ENCODE measurements at regions of chr15 and their contacts with region 1.

Region 1: GRCh38 chr15:45378149-45378912 is at the start of gene GATM:
- DNase-seq: peak; percentile 78
- H3K4me3 Mint-ChIP-seq: peak within 1 kb of the TSS; percentile 84
- H3K27ac Mint-ChIP-seq: no peak within 1 kb of the TSS
- H3K4me1 Mint-ChIP-seq: peaks cover 9% of the 10 kb centered on the region
- H3K27me3 Mint-ChIP-seq: peaks cover 34% of the 10 kb centered on the region
- CTCF ChIP-seq: peak; percentile 39
- total RNA-seq, gene GATM: 0.54 and 1.6 TPM in 2 replicates

Region 2: DNA sequence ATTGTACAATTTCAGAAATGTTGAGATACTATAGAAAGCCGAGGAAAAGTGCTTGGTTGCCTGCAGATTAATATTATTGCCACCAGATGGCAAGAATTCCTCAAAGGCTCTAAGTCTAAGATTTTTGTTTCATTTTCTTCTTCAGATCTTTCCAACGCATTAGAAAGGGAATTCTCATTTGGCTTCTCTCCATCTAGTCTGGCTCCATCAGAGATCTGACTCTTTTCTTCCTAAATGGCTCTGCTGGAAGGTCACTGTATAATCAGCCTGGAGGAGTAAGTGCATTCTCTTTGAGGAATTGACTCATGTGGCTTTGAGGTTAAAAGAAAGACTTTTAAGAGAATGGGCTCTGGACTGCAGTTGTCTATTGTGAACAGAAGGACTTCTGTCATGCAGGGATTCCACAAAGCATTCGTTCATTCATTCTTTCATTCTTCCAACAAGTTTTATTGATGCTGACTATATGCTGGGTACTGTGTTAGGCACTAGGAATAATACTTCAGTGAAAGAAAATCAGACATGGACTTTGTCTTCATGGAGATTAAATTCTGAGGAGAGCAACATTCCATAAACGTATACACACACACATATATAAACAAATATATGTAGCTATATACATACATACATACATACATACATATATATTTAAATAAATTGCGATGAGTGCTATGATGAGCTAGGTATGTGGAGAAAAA is 71.0 kb before region 1 on chr15:
- CTCF ChIA-PET with region 1: interaction called, 3 read pairs
- POLR2A ChIA-PET with region 1: no interaction called
- intact Hi-C with region 1: loop called (anchors 5 kb)
- DNase-seq: peak; percentile 37
- H3K4me3 Mint-ChIP-seq: peak overlapping the region; percentile 35
- H3K27ac Mint-ChIP-seq: no peak overlapping the region
- H3K4me1 Mint-ChIP-seq: peaks cover 6% of the 10 kb centered on the region
- H3K27me3 Mint-ChIP-seq: peaks cover 21% of the 10 kb centered on the region
- CTCF ChIP-seq: peak; percentile 47

Region 3: DNA sequence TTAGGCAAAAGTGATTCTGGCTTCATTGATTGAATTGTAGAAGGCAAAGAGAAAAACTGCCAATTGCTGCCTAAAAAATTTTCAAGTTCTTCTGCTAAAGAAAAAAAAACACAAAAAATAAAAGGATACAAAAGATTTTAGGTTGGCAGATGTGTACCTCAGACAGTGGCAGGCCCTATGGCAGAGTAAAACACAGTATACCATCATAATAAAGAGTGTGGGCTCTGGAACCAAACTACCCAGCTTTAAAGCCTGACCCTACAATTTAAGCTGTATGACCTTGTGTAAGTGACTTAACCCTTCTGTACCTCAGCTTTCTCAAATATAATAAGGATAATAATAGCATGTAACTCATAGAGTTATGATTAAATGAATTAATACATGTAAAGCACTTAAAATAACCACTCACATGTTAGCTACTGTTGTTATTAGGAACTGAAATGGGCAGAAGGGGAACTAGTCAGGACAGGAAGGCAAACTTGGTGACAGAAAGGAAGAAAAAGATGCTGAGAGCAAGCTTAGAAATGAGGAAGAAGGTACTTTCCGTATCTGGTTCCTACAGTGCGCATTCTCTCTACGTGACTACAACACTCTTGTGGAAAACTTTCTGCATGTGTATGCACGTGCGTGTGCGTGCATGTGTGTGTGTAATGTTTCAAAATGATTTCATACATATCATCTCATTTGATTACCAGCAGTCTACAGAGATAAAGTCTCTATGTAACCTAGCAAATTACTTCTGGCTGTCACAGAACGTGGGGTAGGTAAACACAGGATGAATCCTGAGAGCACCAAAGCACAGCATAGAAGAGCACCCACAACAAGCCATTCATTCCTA is 13.6 kb after region 1 on chr15:
- CTCF ChIA-PET with region 1: interaction called, 11 read pairs
- POLR2A ChIA-PET with region 1: interaction called, 8 read pairs
- intact Hi-C with region 1: no loop called
- DNase-seq: no peak
- H3K4me3 Mint-ChIP-seq: no peak overlapping the region
- H3K27ac Mint-ChIP-seq: no peak overlapping the region
- H3K4me1 Mint-ChIP-seq: peaks cover 4% of the 10 kb centered on the region
- H3K27me3 Mint-ChIP-seq: peaks cover 37% of the 10 kb centered on the region
- CTCF ChIP-seq: no peak